HCT116 (cell line): ENCODE measurements at regions of chr17 and their contacts with region 1.

Region 1: DNA sequence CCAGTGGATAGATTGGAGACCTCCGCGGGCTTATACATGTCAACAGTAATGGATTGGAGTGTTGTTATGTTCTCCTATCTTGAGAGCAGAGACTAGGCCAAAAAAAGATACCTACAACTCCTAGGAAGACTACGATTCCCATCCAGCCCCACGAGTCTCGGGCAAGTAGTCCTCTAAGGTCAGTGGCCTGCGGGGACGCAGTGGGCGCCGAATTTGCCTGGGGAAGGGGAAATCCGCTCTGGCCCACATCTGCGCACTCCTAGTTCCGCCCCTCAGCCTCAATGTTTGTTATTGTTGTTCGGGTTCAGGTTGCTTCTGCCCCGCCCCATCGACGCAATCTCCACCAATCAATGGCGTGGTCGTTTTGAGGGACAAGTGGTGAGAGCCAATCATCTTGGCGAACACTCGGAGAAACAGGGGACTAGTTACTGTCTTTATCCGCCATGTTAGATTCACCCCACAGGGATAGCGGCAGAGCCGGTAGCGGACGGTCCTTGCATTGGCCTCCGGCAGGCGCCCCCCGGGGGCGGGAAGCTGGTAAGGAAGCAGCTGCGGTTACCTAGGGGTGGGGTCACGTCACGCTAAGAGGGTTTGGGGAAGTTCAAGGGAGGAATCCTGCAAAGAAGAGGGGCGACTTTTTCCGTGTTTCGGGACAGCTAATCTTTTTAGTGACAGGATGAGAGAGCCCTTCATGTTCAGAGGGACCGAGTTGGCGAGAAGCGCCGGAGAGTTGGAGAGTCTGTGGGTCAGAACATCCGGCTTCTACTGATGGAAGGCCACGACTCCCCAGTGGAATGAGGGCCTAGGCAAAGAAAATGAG is at the start of gene NBR1:
- DNase-seq: peak; percentile 99
- ATAC-seq: peak; percentile 76
- H3K4me3 ChIP-seq: peak within 1 kb of the TSS; percentile 76 to 98
- H3K27ac ChIP-seq: peak within 1 kb of the TSS; percentile 72
- H3K4me1 ChIP-seq: peaks cover 8 to 23% of the 10 kb centered on the region in 2 experiments
- H3K27me3 ChIP-seq: no peaks in the 10 kb centered on the region
- CTCF ChIP-seq: 0 out of 6 replicates have a peak, but pooled peaks of 1 of the 3 experiments have one; percentile 16
- POLR2A ChIP-seq: peak; percentile 65
- RAD21 ChIP-seq: peak; percentile 26
- total RNA-seq, gene NBR1: 60.8 TPM

Region 2: GRCh38 chr17:43114151-43114552 is 56.8 kb before region 1 on chr17:
- CTCF ChIA-PET with region 1: no interaction called
- POLR2A ChIA-PET with region 1: no interaction called
- RAD21 ChIA-PET with region 1: no interaction called
- intact Hi-C with region 1: no loop called
- DNase-seq: no peak
- ATAC-seq: no peak
- H3K4me3 ChIP-seq: no peak overlapping the region
- H3K27ac ChIP-seq: no peak overlapping the region
- H3K4me1 ChIP-seq: no peaks in the 10 kb centered on the region
- H3K27me3 ChIP-seq: no peaks in the 10 kb centered on the region
- CTCF ChIP-seq: no peak
- POLR2A ChIP-seq: no peak
- RAD21 ChIP-seq: no peak

Region 3: DNA sequence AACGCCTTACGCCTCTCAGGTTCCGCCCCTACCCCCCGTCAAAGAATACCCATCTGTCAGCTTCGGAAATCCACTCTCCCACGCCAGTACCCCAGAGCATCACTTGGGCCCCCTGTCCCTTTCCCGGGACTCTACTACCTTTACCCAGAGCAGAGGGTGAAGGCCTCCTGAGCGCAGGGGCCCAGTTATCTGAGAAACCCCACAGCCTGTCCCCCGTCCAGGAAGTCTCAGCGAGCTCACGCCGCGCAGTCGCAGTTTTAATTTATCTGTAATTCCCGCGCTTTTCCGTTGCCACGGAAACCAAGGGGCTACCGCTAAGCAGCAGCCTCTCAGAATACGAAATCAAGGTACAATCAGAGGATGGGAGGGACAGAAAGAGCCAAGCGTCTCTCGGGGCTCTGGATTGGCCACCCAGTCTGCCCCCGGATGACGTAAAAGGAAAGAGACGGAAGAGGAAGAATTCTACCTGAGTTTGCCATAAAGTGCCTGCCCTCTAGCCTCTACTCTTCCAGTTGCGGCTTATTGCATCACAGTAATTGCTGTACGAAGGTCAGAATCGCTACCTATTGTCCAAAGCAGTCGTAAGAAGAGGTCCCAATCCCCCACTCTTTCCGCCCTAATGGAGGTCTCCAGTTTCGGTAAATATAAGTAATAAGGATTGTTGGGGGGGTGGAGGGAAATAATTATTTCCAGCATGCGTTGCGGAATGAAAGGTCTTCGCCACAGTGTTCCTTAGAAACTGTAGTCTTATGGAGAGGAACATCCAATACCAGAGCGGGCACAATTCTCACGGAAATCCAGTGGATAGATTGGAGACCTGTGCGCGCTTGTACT is 45.6 kb before region 1 on chr17 and contains the start of gene BRCA1:
- CTCF ChIA-PET with region 1: no interaction called
- POLR2A ChIA-PET with region 1: interaction called, 6 read pairs
- RAD21 ChIA-PET with region 1: no interaction called
- intact Hi-C with region 1: loop called (anchors 1 kb)
- DNase-seq: peak; percentile 99
- ATAC-seq: peak; percentile 96
- H3K4me3 ChIP-seq: peak within 1 kb of the TSS; percentile 93 to 98
- H3K27ac ChIP-seq: peak within 1 kb of the TSS; percentile 65
- H3K4me1 ChIP-seq: peaks cover 8 to 20% of the 10 kb centered on the region in 2 experiments; a peak in 3 of 4 replicates
- H3K27me3 ChIP-seq: no peaks in the 10 kb centered on the region
- CTCF ChIP-seq: no peak
- POLR2A ChIP-seq: peak; percentile 64
- RAD21 ChIP-seq: no peak
- total RNA-seq, gene BRCA1: 44.1 TPM